ENCODE measurements at regions of chr3 and their contacts with region 1.

Region 1: GRCh38 chr3:135895106-135895733 is 70.3 kb upstream of the PPP2R3A start:
- DNase-seq: peak; percentile 83
- H3K4me3 Mint-ChIP-seq: no peak overlapping the region
- H3K27ac Mint-ChIP-seq: no peak overlapping the region
- H3K4me1 Mint-ChIP-seq: peaks cover 9% of the 10 kb centered on the region
- H3K27me3 Mint-ChIP-seq: peaks cover 24% of the 10 kb centered on the region
- CTCF ChIP-seq: peak; percentile 83

Region 2: GRCh38 chr3:134794950-134795745 is 1100.1 kb before region 1 on chr3 and contains the start of gene EPHB1:
- CTCF ChIA-PET with region 1: interaction called, 10 read pairs
- POLR2A ChIA-PET with region 1: no interaction called
- intact Hi-C with region 1: loop called (anchors 1 kb)
- DNase-seq: peak; percentile 69
- H3K4me3 Mint-ChIP-seq: peak within 1 kb of the TSS; percentile 69
- H3K27ac Mint-ChIP-seq: no peak within 1 kb of the TSS
- H3K4me1 Mint-ChIP-seq: peaks cover 5% of the 10 kb centered on the region
- H3K27me3 Mint-ChIP-seq: peaks cover 48% of the 10 kb centered on the region
- CTCF ChIP-seq: peak; percentile 90
- total RNA-seq, gene EPHB1: not detected in 2 replicates

Region 3: DNA sequence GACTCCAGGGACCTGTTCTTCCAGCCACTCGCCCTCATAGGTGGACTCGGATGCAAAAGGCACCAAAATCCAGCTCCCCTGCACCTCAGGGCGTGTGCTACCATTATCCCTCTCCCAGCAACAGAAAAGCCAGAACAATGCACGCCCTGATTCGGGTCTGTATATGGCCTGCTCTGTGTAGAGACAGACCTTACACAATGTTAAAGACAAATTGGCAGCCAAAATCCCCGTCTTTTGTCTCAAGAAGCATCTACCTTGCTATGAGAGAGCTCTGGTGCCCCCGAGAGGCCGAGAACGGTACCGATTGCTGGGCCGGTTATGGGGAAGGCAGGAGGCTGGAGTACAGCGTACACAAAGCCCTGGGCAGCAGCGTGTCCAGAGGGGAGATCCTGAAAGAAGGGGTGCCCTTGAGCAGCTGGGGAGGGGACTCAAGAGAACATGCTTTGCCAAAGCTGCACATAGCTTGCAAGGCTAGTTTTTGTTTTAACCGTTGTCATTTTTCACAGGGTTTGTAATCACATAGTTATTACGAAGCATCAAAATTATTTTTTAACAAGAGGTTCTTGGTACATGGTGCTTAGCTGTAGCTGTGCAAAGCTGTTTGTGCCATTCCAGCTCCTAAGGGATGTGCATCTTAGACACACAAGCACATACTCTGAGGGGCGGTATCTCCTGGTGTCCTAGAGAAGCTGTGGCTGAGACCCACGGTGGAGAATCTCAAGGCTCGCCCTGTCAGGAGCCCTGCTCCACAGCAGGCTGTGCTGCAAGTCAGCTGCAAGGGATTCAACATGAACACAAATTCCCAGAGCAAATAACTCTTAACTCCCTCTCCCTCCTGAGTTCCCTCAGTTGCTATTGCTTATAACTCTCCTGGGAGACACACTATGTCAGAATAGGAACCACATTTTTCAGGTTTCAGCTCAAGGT is 391.2 kb before region 1 on chr3:
- CTCF ChIA-PET with region 1: interaction called, 4 read pairs
- POLR2A ChIA-PET with region 1: no interaction called
- intact Hi-C with region 1: loop called (anchors 5 kb)
- DNase-seq: peak; percentile 69
- H3K4me3 Mint-ChIP-seq: no peak overlapping the region
- H3K27ac Mint-ChIP-seq: no peak overlapping the region
- H3K4me1 Mint-ChIP-seq: peaks cover 5% of the 10 kb centered on the region
- H3K27me3 Mint-ChIP-seq: peaks cover 41% of the 10 kb centered on the region
- CTCF ChIP-seq: peak; percentile 62

Region 4: GRCh38 chr3:135694142-135694541 is 201.1 kb before region 1 on chr3:
- CTCF ChIA-PET with region 1: no interaction called
- POLR2A ChIA-PET with region 1: no interaction called
- intact Hi-C with region 1: no loop called
- DNase-seq: no peak
- H3K4me3 Mint-ChIP-seq: no peak overlapping the region
- H3K27ac Mint-ChIP-seq: no peak overlapping the region
- H3K4me1 Mint-ChIP-seq: no peaks in the 10 kb centered on the region
- H3K27me3 Mint-ChIP-seq: no peaks in the 10 kb centered on the region
- CTCF ChIP-seq: no peak

Region 5: GRCh38 chr3:135736740-135737139 is 158.5 kb before region 1 on chr3:
- CTCF ChIA-PET with region 1: interaction called, 5 read pairs
- POLR2A ChIA-PET with region 1: no interaction called
- intact Hi-C with region 1: loop called (anchors 1 kb)
- DNase-seq: peak; percentile 66
- H3K4me3 Mint-ChIP-seq: no peak overlapping the region
- H3K27ac Mint-ChIP-seq: no peak overlapping the region
- H3K4me1 Mint-ChIP-seq: no peaks in the 10 kb centered on the region
- H3K27me3 Mint-ChIP-seq: peaks cover 16% of the 10 kb centered on the region
- CTCF ChIP-seq: peak; percentile 21